ENCODE measurements at regions of chrX and their contacts with region 1.

Region 1: GRCh38 chrX:55907968-55908607 is 190.5 kb downstream of the RRAGB start:
- DNase-seq: peak; percentile 36 to 43 (median 39)
- H3K4me3 ChIP-seq: peak overlapping the region; percentile 47 to 78
- H3K4me3 Mint-ChIP-seq: peak overlapping the region; percentile 90 to 98 (median 92)
- H3K27ac ChIP-seq: peak overlapping the region; percentile 44
- H3K27ac Mint-ChIP-seq: peak overlapping the region; percentile 59 to 86 (median 73)
- H3K4me1 ChIP-seq: peaks cover 10% of the 10 kb centered on the region
- H3K4me1 Mint-ChIP-seq: peaks cover 8 to 24% (median 13%) of the 10 kb centered on the region in 4 donors
- H3K27me3 ChIP-seq: no peaks in the 10 kb centered on the region
- H3K27me3 Mint-ChIP-seq: no peaks in the 10 kb centered on the region

Region 2: GRCh38 chrX:54964766-54965497 is 943.2 kb before region 1 on chrX:
- CTCF ChIA-PET with region 1: no interaction called
- POLR2A ChIA-PET with region 1: no interaction called
- intact Hi-C with region 1: no loop called
- DNase-seq: peak in 4 of 5 donors; percentile 9 to 18 (median 12)
- H3K4me3 ChIP-seq: no peak overlapping the region
- H3K4me3 Mint-ChIP-seq: peak overlapping the region in 7 of 8 donors; percentile 14 to 74 (median 52)
- H3K27ac ChIP-seq: no peak overlapping the region
- H3K27ac Mint-ChIP-seq: peak overlapping the region in 6 of 7 donors; percentile 15 to 84 (median 44)
- H3K4me1 ChIP-seq: peaks cover 5% of the 10 kb centered on the region
- H3K4me1 Mint-ChIP-seq: peaks cover 11 to 23% (median 13%) of the 10 kb centered on the region in 4 donors
- H3K27me3 ChIP-seq: no peaks in the 10 kb centered on the region
- H3K27me3 Mint-ChIP-seq: peaks cover 0 to 1% of the 10 kb centered on the region in 2 donors

Region 3: DNA sequence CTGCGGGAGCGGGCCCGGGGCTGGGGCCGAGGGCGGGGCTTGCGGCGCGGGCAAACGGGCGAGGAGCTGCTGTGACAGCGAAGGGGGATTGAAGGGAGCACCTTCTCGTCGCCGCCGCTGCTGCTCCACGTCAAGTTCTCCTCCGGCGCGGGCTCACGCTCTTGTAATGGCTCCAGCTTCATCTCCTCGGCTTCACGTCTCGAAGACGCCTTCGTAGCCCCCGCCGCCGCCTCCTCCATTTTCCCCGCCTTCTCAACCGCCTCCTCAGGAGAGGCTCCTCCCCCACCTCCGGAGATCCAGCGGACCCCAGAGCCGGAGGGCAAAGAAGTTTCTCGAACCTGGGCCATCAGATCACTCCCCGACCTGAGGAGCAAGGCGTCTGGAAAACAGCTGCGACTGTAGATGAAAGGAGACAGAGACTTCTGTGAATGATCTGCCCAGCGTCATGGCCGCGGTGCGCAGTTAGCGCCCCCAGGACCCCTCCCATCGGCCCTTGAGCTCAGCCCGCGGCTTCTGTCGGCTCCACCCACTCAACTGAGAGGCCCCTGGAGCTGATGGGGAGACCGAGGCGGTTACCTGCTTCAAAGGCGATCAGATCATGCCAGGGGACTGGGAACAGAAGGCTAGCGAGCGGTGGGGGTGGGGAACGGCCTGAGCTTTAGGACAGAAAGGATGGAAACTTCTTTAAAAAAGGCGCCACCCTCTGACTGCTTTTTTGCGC is 419.3 kb before region 1 on chrX:
- CTCF ChIA-PET with region 1: interaction called, 10 read pairs
- POLR2A ChIA-PET with region 1: interaction called, 8 read pairs
- intact Hi-C with region 1: no loop called
- DNase-seq: peak; percentile 66 to 74 (median 71)
- H3K4me3 ChIP-seq: peak overlapping the region; percentile 52 to 86
- H3K4me3 Mint-ChIP-seq: peak overlapping the region; percentile 93 to 97 (median 94)
- H3K27ac ChIP-seq: peak overlapping the region; percentile 83
- H3K27ac Mint-ChIP-seq: peak overlapping the region; percentile 93 to 98 (median 95)
- H3K4me1 ChIP-seq: peaks cover 10% of the 10 kb centered on the region
- H3K4me1 Mint-ChIP-seq: peaks cover 4 to 18% (median 12%) of the 10 kb centered on the region in 4 donors
- H3K27me3 ChIP-seq: no peaks in the 10 kb centered on the region
- H3K27me3 Mint-ChIP-seq: no peaks in the 10 kb centered on the region

Region 4: DNA sequence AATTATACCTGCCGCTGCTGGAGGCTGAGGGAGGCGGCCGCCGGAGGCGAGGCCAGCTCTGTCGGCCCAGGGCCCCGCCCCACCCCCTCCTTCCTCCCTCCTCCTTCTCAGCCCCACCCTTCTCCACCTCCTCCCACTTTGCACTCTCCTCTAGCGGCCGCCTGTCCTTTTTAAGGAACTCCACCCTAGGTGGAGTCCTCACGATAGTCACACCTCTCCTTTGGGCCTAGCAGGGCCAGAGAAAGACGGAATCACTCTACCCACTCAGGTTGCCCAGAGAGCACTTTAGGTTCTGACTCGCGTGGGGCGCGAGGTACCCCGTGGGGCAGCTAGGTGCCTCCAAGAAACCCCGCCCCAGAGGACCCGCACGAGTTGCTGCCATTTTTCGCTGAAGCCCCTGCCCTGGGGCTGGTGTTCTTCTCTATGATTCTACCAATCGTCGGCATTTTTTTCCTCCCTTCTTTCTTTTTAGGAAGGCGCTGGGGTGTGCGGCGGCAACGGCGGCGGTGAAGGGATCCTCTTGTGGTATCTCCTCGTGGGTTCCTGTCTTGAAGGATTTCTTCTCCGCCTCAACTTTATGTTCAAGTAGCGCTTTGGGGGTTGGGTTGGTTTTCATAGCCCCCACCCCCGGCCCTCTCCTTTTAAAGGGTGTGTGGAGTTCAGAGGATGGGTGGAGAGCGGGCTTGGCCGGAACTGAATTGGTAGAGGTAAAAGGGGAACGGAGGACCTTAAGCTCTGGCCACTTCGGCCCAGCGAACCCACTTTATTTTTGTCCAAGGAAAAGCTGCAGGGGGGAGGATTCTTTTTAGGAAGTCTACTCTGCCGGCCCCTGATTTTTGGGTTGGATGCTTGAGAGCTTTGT is 324.4 kb after region 1 on chrX and contains the start of gene KLF8:
- CTCF ChIA-PET with region 1: interaction called, 4 read pairs
- POLR2A ChIA-PET with region 1: no interaction called
- intact Hi-C with region 1: loop called (anchors 5 kb)
- DNase-seq: peak; percentile 22 to 48 (median 31)
- H3K4me3 ChIP-seq: peak within 1 kb of the TSS; percentile 42 to 44
- H3K4me3 Mint-ChIP-seq: peak within 1 kb of the TSS; percentile 84 to 90 (median 86)
- H3K27ac ChIP-seq: peak within 1 kb of the TSS; percentile 31
- H3K27ac Mint-ChIP-seq: peak within 1 kb of the TSS; percentile 27 to 84 (median 74)
- H3K4me1 ChIP-seq: peaks cover 11% of the 10 kb centered on the region
- H3K4me1 Mint-ChIP-seq: peaks cover 12 to 32% (median 25%) of the 10 kb centered on the region in 4 donors
- H3K27me3 ChIP-seq: no peaks in the 10 kb centered on the region
- H3K27me3 Mint-ChIP-seq: no peaks in the 10 kb centered on the region
- total RNA-seq, gene KLF8: 5.4 to 7.0 TPM